ENCODE measurements at regions of chr11 and their contacts with region 1.

Region 1: GRCh38 chr11:34926101-34926830 is 9.8 kb downstream of the PDHX start:
- DNase-seq: peak in 4 of 14 experiments; percentile 27 to 76 (median 66)
- ATAC-seq: peak; percentile 62
- H3K4me3 ChIP-seq: no peak overlapping the region
- H3K4me3 Mint-ChIP-seq: no peak overlapping the region
- H3K27ac ChIP-seq: no peak overlapping the region
- H3K27ac Mint-ChIP-seq: no peak overlapping the region
- H3K4me1 ChIP-seq: no peaks in the 10 kb centered on the region
- H3K4me1 Mint-ChIP-seq: peaks cover 36% of the 10 kb centered on the region
- H3K27me3 ChIP-seq: no peaks in the 10 kb centered on the region
- H3K27me3 Mint-ChIP-seq: no peaks in the 10 kb centered on the region
- CTCF ChIP-seq: peak; percentile 94

Region 2: GRCh38 chr11:34997952-34998528 is 71.8 kb after region 1 on chr11:
- CTCF ChIA-PET with region 1: no interaction called
- POLR2A ChIA-PET with region 1: no interaction called
- intact Hi-C with region 1: loop called in 1 of 2 experiments (anchors 5 kb)
- DNase-seq: peak in 3 of 14 experiments; percentile 42 to 56 (median 55)
- ATAC-seq: peak; percentile 64
- H3K4me3 ChIP-seq: no peak overlapping the region
- H3K4me3 Mint-ChIP-seq: peak overlapping the region; percentile 39
- H3K27ac ChIP-seq: no peak overlapping the region
- H3K27ac Mint-ChIP-seq: peak overlapping the region; percentile 48
- H3K4me1 ChIP-seq: no peaks in the 10 kb centered on the region
- H3K4me1 Mint-ChIP-seq: peaks cover 37% of the 10 kb centered on the region
- H3K27me3 ChIP-seq: no peaks in the 10 kb centered on the region
- H3K27me3 Mint-ChIP-seq: no peaks in the 10 kb centered on the region
- CTCF ChIP-seq: peak; percentile 94

Region 3: DNA sequence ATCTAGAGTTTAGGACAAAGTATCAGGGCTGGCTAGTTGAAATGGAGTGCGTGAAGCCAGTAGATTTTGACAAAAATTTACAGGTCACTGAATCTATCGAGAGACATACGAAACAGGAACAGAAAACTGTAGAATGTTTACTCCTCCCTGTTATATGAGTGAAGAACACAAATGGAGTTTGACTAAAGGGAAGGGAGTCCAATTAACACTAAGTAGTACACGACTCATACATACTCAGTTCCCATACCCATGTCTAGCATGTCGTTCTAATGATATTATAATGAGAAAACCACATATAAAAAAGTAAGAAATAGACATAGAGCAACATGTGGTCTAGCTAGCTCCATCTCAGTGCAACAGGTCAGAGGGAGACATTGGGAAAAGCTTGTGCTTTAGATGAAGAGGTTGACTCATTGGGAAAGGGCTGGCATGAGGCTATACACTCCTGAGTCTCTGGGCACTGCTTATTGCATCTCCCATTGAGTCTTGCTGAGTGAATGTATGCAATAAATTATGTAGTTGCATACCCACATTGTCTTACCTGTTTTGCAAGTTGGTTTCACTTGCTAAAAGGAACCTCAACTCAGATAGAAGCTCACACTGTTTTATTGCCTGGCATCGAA is 256.2 kb after region 1 on chr11:
- CTCF ChIA-PET with region 1: interaction called, 3 read pairs
- POLR2A ChIA-PET with region 1: interaction called, 3 read pairs
- intact Hi-C with region 1: loop called in 1 of 2 experiments (anchors 10 kb)
- DNase-seq: no peak
- ATAC-seq: no peak
- H3K4me3 ChIP-seq: no peak overlapping the region
- H3K4me3 Mint-ChIP-seq: peak overlapping the region; percentile 69
- H3K27ac ChIP-seq: peak overlapping the region in 1 of 2 donors; percentile 24
- H3K27ac Mint-ChIP-seq: peak overlapping the region; percentile 80
- H3K4me1 ChIP-seq: peaks cover 56% of the 10 kb centered on the region
- H3K4me1 Mint-ChIP-seq: peaks cover 97% of the 10 kb centered on the region
- H3K27me3 ChIP-seq: no peaks in the 10 kb centered on the region
- H3K27me3 Mint-ChIP-seq: no peaks in the 10 kb centered on the region
- CTCF ChIP-seq: no peak

Region 4: GRCh38 chr11:35305670-35306382 is 379.6 kb after region 1 on chr11:
- CTCF ChIA-PET with region 1: interaction called, 11 read pairs
- POLR2A ChIA-PET with region 1: interaction called, 3 read pairs
- intact Hi-C with region 1: loop called (anchors 5 kb)
- DNase-seq: peak; percentile 23 to 78 (median 32)
- ATAC-seq: peak; percentile 77
- H3K4me3 ChIP-seq: no peak overlapping the region
- H3K4me3 Mint-ChIP-seq: peak overlapping the region; percentile 65
- H3K27ac ChIP-seq: no peak overlapping the region
- H3K27ac Mint-ChIP-seq: peak overlapping the region; percentile 4
- H3K4me1 ChIP-seq: peaks cover 28% of the 10 kb centered on the region
- H3K4me1 Mint-ChIP-seq: peaks cover 26% of the 10 kb centered on the region
- H3K27me3 ChIP-seq: no peaks in the 10 kb centered on the region
- H3K27me3 Mint-ChIP-seq: no peaks in the 10 kb centered on the region
- CTCF ChIP-seq: peak; percentile 76

Region 5: DNA sequence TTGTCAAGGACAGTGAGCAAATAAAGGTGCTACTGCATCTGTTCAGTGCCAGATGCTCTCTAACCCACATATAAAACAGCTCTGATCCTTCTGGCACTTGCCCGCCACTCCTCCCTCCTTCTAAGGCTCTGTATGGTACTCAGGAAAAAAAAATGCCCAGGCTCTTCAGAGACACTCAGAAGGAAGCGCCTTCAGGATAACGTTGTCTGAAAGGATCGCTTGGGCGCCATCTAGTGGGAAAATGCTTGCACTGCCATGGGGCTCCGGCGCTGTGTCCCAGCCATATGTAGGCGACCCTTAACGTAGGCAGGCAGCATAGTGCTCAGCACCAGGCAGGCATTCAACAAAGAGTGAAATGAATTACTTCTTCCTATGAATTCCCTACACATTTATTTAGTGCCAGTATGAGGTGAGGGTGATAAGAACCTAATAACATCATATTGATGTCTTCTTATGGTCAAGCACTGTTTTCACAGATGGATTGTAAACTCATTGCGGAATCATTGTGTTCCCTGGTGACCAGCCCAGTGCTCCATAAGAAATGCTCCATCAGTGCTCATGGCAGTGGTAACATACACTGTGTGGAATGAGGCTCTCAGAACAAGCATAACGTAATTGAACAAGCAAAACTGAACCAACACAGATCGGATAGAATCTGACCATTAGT is 559.5 kb after region 1 on chr11:
- CTCF ChIA-PET with region 1: no interaction called
- POLR2A ChIA-PET with region 1: no interaction called
- intact Hi-C with region 1: loop called (anchors 1 to 2 kb)
- DNase-seq: peak; percentile 49 to 80 (median 63)
- ATAC-seq: peak; percentile 70
- H3K4me3 ChIP-seq: no peak overlapping the region
- H3K4me3 Mint-ChIP-seq: no peak overlapping the region
- H3K27ac ChIP-seq: no peak overlapping the region
- H3K27ac Mint-ChIP-seq: no peak overlapping the region
- H3K4me1 ChIP-seq: peaks cover 4% of the 10 kb centered on the region
- H3K4me1 Mint-ChIP-seq: no peaks in the 10 kb centered on the region
- H3K27me3 ChIP-seq: peaks cover 4 to 26% of the 10 kb centered on the region in 2 experiments
- H3K27me3 Mint-ChIP-seq: peaks cover 66% of the 10 kb centered on the region
- CTCF ChIP-seq: peak; percentile 95

Measured in CD4-positive, alpha-beta T cell (primary cell).